ENCODE measurements at regions of chr1 and their contacts with region 1.

Region 1: DNA sequence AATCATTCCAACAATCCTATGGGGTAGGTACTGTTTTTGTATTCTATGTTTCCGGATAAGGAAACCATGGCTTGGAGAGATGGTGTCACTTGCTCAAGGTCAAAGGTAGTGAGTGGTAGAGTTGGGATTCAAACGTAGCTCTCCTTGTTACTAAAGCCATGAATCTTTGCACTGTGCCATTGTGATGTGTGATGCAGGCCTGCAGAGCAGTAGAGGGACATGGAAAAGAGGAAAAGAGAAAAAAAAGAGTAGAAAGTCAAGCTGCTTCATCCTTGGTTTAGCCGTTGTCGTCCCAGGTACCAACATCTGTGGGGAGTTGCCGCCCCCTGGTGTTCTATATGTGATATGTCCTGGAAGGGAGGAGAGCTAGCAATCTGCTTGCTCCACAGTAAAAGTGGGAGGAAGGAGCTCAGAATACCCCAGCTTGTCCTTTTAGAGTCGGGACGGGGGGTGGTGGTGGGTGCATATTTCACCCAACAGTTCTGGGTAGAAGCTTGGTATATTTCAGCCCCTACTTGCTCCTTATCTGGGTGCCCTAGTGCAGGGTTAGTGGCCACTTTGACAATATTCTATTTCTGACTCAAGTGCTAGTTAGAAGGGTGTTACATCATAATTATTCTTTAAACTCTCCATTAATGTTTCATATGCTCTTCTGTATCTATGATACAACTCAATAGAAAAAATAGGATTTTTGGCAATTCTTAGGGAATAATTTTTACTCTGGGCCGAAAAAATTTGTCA is 98.4 kb downstream of the EBNA1BP2 start:
- DNase-seq: no peak
- H3K4me3 ChIP-seq: no peak overlapping the region
- CTCF ChIP-seq: peak; percentile 71

Region 2: GRCh38 chr1:42784547-42784945 is 289.1 kb before region 1 on chr1:
- CTCF ChIA-PET with region 1: interaction called, 128 read pairs
- POLR2A ChIA-PET with region 1: no interaction called
- DNase-seq: no peak
- H3K4me3 ChIP-seq: peak overlapping the region; percentile 44; the same call in 1 of the 2 replicates
- CTCF ChIP-seq: no peak

Region 3: DNA sequence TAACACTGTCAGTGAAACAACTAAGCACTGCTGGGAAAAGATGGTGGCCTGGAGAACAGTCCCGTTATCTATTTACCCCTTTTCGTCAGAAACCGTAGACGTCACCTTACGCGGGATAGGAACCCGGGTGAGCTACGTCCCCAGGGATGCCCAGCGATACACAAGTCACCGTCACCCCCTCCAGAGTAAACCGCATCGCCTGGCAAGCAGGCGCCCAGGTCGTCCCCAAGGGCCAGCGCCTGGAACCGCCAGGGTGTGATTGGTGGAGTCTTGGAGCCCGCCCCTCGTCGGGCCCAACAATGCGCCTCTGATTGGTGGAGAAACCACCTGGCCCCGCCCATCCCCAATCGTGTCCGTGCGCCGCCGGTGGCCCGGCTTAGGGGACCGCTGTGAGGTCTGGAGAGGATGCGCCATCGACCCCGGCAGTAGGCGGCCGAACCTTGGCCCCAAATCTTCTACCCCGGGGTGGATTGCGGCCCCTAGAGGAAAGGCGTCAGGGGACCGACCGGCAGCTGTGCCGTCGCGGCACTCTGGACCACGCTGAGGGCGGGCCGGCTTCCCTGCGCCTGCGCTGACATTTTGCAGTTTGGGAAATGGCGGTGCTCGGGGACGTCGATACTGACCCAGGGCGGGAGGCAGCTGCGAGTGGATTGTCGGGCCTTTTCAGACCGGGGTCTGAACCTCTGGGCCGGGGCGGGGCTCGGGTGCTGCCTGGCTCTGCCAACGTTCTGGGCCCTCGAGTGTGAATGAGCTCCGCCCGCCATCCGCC is 149.4 kb before region 1 on chr1:
- CTCF ChIA-PET with region 1: interaction called, 927 read pairs
- POLR2A ChIA-PET with region 1: interaction called, 3 read pairs
- DNase-seq: peak; percentile 24
- H3K4me3 ChIP-seq: peak overlapping the region; percentile 66
- CTCF ChIP-seq: peak; percentile 7

Region 4: GRCh38 chr1:42941640-42942330 is 131.9 kb before region 1 on chr1:
- CTCF ChIA-PET with region 1: interaction called, 34 read pairs
- POLR2A ChIA-PET with region 1: no interaction called
- DNase-seq: no peak
- H3K4me3 ChIP-seq: no peak overlapping the region
- CTCF ChIP-seq: no peak

Region 5: GRCh38 chr1:42971841-42972291 is 101.8 kb before region 1 on chr1:
- CTCF ChIA-PET with region 1: interaction called, 12 read pairs
- POLR2A ChIA-PET with region 1: no interaction called
- DNase-seq: peak; percentile 74
- H3K4me3 ChIP-seq: no peak overlapping the region
- CTCF ChIP-seq: no peak

Region 6: GRCh38 chr1:43098200-43098599 is 24.5 kb after region 1 on chr1:
- CTCF ChIA-PET with region 1: interaction called, 10 read pairs
- POLR2A ChIA-PET with region 1: no interaction called
- DNase-seq: no peak
- H3K4me3 ChIP-seq: no peak overlapping the region
- CTCF ChIP-seq: no peak

Region 7: GRCh38 chr1:43293896-43294760 is 220.5 kb after region 1 on chr1:
- CTCF ChIA-PET with region 1: no interaction called
- POLR2A ChIA-PET with region 1: no interaction called
- DNase-seq: no peak
- H3K4me3 ChIP-seq: no peak overlapping the region
- CTCF ChIP-seq: no peak